ENCODE measurements at regions of chr1 and their contacts with region 1.

Region 1: DNA sequence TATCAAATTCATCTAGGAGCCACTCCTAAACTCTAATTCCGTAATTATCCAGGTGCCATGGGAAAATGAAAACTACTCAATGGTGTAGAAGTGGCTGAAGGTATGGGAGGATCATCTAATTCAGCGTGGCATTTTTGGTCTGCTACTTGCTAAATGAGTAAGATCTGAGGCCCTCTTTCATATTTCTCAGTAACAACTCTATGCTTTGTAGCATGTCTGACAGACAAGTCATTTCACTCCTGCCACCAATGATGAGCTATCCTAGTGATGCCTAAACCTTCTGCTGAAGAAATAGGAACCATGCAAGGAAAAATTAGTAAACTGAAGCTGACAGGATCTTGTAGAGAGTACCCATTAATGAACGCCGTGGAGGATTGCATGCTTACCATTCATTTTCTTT is 145.3 kb downstream of the NTNG1 start:
- DNase-seq: no peak
- ATAC-seq: no peak

Region 2: DNA sequence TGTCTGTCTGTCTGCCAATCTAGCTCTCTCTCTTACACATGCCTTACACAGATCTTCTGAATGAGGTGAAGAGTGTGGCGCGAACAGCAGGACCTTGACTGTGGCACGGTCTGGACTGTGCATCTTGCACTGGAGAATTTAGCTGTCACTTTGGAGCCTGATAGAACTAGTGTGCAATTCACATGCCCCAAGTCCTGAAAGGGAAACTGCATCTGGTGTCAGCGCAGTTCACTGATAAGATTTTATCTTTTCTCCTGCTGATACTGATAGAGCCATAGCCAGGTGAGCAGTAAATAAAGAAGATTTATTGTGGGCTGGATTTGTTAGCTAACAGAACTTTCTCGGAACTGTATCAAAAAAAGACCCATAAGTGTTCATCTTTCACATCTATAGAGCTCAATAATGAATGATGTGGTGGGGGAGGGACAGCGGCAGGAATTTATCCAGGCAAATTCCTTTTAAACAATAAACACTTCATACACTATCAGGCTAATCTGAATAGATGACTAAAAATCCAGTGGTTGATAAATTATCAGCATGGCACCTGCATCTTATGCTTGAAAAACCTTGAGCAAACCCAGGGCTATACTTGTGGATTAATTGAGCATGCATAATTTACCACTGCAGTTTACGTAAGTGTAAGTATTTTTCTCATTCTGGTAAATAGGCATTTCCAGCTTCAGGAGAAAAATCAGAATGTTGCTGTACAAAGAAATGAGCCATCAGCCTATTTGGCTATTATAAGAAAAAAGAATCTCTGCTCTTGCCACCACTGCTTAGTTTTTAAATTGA is 41.2 kb before region 1 on chr1:
- intact Hi-C with region 1: loop called in 1 of 2 experiments (anchors 2 kb)
- DNase-seq: no peak
- ATAC-seq: no peak